Lower lobe of right lung (tissue), 2 donors: ENCODE measurements at regions of chr11 and their contacts with region 1.

Region 1: DNA sequence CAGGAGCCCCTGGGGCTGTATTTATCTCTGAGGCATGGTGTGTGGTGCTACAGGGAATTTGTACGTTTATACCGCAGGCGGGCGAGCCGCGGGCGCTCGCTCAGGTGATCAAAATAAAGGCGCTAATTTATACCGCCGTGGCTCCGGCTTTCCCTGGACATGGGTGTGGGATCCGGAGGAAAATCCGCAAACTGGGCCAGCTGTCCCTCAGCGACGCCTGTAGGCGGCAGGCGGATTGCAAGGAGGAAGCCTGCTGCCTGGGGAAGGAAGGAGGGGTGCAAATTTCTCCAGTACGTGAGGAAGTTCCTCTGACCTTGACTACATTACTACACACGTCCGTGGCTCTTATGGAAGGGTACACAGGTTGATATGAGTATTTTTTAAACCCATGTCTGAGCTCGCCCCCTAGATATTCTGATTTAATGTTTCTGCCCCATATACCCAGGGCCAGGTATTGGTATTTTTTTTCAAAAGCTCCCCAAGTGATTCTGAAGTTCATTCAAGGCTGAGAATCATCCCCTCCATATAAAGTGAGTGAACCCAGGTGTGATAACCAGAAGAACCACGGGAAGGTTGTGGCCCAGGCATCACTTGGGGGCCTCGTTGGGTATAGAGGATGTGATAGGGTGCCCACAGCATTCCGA is 2.8 kb downstream of the MYOD1 start:
- DNase-seq: no peak
- ATAC-seq: no peak
- H3K4me3 ChIP-seq: no peak overlapping the region
- H3K27ac ChIP-seq: no peak overlapping the region
- H3K4me1 ChIP-seq: no peaks in the 10 kb centered on the region
- H3K27me3 ChIP-seq: peaks cover 81% of the 10 kb centered on the region
- CTCF ChIP-seq: no peak

Region 2: DNA sequence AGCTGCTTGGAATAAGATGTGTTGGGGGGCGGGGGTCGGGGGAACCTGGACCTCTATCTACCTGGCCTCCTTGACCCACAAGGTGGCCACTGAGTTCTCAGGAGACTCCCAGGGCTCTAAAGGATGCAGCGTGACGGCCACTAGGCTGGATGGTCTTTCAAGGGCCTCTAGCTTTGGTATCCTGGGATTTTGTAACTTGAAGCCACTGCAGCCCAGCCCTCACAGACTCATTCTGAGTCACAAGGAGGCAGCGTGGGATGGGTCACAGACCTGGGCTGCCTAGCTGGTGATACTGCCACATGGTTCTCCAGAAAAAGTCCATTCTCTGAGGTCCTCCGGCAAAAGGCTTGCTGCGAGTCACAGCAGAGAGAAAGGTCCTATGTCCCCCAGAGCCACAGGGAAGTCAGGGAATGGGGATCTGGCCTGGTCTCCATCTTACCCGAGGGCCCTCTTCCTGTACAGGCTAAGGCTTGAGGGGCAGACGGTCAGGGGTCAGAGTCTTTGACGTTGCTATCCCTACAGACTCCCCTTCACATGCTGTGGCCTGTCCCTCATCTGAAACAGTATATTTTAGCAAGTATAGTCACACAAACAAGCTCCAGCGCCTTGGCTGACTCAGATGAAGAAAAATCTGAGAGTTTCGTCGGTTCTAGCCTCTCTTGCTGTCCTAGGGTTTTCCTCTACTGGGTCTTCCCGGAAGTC is 64.9 kb after region 1 on chr11:
- intact Hi-C with region 1: no loop called
- DNase-seq: no peak
- ATAC-seq: no peak
- H3K4me3 ChIP-seq: no peak overlapping the region
- H3K27ac ChIP-seq: no peak overlapping the region
- H3K4me1 ChIP-seq: no peaks in the 10 kb centered on the region
- H3K27me3 ChIP-seq: no peaks in the 10 kb centered on the region
- CTCF ChIP-seq: no peak

Region 3: DNA sequence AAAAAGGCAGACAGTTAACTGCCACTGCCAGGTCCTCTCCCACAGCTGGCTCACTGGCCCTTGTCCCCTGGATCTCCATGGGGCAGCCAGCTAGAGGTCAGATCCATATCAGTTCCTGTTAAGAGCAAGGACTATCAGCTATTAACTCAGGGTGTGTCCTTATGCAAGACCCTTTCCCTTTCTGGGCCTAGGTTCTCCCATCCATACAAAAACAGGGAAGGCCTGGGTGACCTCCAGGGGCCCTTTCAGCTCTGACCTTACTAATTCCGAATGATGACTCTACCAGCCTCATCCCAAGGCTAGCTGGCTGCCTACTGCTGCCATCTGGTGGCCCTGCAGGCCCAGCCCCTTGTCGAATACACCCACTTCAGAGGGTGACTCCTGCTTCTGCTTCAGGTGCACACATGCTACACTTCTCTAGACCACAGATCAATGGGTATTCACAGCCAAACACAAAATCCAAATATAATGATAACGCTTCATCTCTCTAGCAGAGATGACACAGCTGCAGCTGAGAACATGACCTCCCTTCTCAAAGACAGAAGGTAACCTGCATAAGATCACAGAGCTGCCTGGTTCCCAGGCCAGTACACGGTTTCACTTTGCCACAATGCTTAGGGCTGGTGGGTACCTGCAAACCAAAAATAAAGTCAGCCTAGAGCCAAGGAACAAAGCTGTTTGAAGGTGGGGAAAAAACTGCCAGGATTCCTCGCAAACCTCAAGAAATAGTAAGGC is 256.6 kb after region 1 on chr11:
- intact Hi-C with region 1: loop called (anchors 10 kb)
- DNase-seq: no peak
- ATAC-seq: peak; percentile 63 to 69
- H3K4me3 ChIP-seq: no peak overlapping the region
- H3K27ac ChIP-seq: no peak overlapping the region
- H3K4me1 ChIP-seq: no peaks in the 10 kb centered on the region
- H3K27me3 ChIP-seq: no peaks in the 10 kb centered on the region
- CTCF ChIP-seq: peak; percentile 56